ENCODE measurements at regions of chr10 and their contacts with region 1.

Region 1: GRCh38 chr10:29784175-29784773 is 149.5 kb upstream of the SVIL start:
- DNase-seq: peak; percentile 99
- H3K4me3 ChIP-seq: no peak overlapping the region
- H3K27ac ChIP-seq: peak overlapping the region; percentile 82
- H3K4me1 ChIP-seq: peaks cover 27% of the 10 kb centered on the region
- H3K27me3 ChIP-seq: no peaks in the 10 kb centered on the region
- CTCF ChIP-seq: no peak
- POLR2A ChIP-seq: peak; percentile 63

Region 2: DNA sequence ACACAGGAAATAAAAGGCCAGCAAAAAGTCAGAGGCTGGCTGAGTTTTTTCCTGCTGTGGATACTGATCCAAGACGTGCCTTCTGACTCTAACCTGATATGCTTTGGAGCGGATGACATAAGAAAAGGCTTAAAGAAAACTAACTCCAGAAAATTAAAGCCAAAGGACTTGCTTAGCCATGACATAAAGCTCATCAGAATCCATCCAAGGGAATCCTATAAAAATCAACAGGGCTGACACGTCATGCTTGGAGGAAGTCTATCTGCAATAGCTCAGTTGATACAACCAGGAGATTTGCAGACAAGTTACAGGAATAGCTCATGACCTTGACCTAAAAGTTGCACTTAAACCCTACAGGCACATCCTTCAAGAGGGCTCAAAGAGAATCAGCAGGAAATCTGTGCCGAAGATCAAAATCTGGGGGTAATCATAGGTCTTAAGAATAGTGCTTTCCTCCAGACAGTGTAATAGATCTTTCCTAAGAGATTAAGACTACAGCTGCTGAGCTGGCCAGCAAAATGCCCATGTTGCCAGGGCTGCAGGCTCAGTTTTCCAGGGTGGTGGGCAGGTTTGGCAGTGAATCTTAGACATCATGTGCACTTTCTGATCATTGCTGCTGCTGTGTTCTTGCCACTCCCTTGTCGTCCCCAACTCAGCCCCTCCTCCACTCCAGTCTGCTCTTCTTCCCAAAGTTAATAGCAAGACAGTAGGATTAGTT is 38.0 kb before region 1 on chr10:
- CTCF ChIA-PET with region 1: no interaction called
- POLR2A ChIA-PET with region 1: interaction called, 3 read pairs
- dilution Hi-C with region 1: no loop called
- intact Hi-C with region 1: loop called (anchors 2 kb)
- DNase-seq: peak; percentile 90
- H3K4me3 ChIP-seq: no peak overlapping the region
- H3K27ac ChIP-seq: peak overlapping the region; percentile 68
- H3K4me1 ChIP-seq: peaks cover 16% of the 10 kb centered on the region
- H3K27me3 ChIP-seq: no peaks in the 10 kb centered on the region
- CTCF ChIP-seq: no peak
- POLR2A ChIP-seq: no peak

Region 3: DNA sequence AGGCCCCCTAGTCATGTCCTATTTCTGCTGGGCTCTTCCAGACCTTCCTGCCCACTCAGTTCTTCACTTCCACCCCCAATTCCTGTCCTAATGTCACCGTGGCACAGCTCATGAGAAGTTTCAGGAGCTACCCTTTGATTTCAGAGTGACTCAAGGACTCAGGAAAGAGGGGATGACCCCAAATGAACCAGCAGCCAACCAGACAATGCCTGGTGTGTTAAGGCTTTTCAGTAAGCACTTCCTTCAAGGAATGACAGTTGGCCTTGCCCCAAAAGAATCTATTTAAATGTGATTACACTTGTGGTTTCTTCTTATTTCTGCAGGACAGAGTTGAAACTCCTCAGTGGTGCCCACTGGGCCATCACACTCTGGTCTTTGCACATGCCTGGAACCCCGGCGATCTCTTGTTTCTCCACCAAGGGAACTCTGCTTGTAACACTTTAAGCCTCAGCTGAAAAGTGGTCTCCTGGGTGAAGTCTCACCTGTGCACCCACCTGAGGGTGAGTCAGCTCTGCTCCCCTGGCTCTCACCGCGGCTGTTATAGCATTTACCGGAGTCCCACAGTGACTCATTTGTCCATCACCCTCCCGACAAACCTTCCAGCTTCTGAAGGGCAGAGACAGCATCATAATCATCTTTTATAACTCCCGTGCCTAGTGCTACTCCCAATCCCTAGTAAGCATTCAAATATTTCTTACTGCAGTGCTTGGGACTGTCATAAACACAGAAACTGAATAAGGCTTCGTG is 26.6 kb before region 1 on chr10:
- CTCF ChIA-PET with region 1: no interaction called
- POLR2A ChIA-PET with region 1: no interaction called
- dilution Hi-C with region 1: no loop called
- intact Hi-C with region 1: loop called (anchors 1 kb)
- DNase-seq: peak; percentile 83
- H3K4me3 ChIP-seq: peak overlapping the region in 1 of 3 experiments; percentile 26
- H3K27ac ChIP-seq: peak overlapping the region; percentile 66
- H3K4me1 ChIP-seq: peaks cover 26% of the 10 kb centered on the region
- H3K27me3 ChIP-seq: no peaks in the 10 kb centered on the region
- CTCF ChIP-seq: no peak
- POLR2A ChIP-seq: no peak

Region 4: DNA sequence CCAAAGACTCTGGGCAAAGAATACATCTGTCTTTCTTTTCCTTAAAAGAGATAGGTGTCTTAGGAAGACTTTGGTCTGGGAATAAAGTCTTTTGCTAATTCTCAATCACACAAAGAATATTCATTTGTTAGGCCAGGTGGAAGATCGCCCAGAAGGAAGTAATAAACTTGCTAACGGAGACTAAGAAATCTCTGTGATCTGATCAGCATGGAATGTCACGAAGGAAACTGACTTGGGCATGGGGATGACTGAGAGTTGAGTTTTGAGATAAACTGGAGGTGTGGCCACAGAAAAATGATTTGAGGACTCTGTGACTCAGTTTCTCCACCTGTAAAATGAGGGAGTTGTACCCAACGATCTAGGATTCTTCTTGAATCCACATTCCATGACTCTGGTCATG is 11.6 kb after region 1 on chr10:
- CTCF ChIA-PET with region 1: interaction called, 5 read pairs
- POLR2A ChIA-PET with region 1: no interaction called
- dilution Hi-C with region 1: no loop called
- intact Hi-C with region 1: loop called (anchors 1 kb)
- DNase-seq: peak; percentile 60
- H3K4me3 ChIP-seq: no peak overlapping the region
- H3K27ac ChIP-seq: peak overlapping the region; percentile 25
- H3K4me1 ChIP-seq: peaks cover 35% of the 10 kb centered on the region
- H3K27me3 ChIP-seq: no peaks in the 10 kb centered on the region
- CTCF ChIP-seq: no peak
- POLR2A ChIP-seq: no peak

Region 5: DNA sequence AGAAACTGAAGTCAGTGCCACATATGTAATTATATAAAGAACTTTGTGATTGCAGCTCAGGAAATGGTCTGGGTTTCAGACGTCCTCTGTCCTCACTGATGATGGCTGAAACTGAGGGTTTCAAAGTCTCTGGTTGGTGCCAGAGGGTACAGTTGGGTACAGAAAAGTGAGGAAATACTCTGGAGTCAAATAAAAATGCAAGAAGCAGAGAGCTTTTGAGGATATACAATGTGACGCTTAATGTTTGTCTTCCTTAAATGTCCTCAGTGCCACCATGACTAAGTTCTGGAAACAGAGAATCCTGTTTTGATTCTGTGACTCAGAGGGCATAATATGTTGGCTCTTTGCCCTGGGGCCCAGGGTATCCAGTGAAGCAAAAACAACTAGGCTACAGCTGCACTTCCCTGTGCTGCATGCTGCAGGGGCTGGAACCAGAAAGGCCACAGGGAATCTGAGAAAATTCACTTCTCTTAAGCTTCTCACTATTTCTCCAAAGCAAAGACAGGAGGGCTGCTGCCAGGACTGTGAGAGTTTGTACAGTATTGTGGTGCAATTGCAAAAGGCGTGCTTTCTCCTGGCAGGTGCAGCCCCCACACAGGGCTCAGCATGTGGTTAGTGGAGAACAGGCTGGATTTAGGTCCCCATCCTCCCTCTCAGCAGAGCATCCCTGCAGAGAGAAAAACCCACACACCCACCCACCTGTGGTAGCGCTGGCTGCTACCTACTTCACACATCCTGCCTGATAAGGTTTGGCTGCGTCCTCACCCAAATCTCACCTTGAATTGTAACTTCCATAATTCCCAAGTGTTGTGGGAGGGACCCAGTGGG is 20.0 kb after region 1 on chr10:
- CTCF ChIA-PET with region 1: interaction called, 5 read pairs
- POLR2A ChIA-PET with region 1: interaction called, 3 read pairs
- dilution Hi-C with region 1: no loop called
- intact Hi-C with region 1: loop called (anchors 1 kb)
- DNase-seq: peak; percentile 99
- H3K4me3 ChIP-seq: peak overlapping the region in 1 of 3 experiments; percentile 31
- H3K27ac ChIP-seq: peak overlapping the region; percentile 99
- H3K4me1 ChIP-seq: peaks cover 54% of the 10 kb centered on the region
- H3K27me3 ChIP-seq: no peaks in the 10 kb centered on the region
- CTCF ChIP-seq: no peak
- POLR2A ChIP-seq: no peak

Region 6: DNA sequence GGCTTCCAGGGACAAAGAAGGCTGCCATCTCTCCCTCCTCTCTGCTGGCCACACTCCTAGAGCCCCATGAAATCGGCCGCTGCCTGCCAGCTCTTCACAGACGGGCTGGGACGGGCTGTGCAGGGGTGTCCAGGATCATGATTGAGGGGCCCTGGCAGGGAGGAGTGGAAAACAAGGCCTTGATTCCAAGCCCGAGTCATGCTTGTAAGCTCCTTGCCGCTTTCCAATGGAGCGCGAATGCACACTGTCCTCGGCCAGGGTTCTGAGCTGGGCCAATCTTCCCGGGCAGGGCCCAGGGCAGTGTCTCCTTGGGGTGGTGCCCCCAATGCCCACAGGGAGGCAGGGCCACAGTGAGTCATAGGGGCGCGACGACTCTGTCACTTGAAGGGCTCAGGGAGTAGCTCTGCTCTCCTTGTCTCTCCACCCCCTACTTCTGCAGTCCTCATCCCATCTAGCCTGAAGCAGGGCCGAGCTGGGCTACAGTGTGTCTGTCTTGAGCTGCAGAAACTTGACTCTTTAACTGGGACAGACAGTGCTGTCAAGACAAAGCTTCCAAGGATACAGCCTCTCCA is 36.7 kb after region 1 on chr10:
- CTCF ChIA-PET with region 1: no interaction called
- POLR2A ChIA-PET with region 1: no interaction called
- dilution Hi-C with region 1: no loop called
- intact Hi-C with region 1: no loop called
- DNase-seq: no peak
- H3K4me3 ChIP-seq: no peak overlapping the region
- H3K27ac ChIP-seq: no peak overlapping the region
- H3K4me1 ChIP-seq: no peaks in the 10 kb centered on the region
- H3K27me3 ChIP-seq: no peaks in the 10 kb centered on the region
- CTCF ChIP-seq: no peak
- POLR2A ChIP-seq: no peak

Region 7: GRCh38 chr10:29849126-29849833 is 65.0 kb after region 1 on chr10:
- CTCF ChIA-PET with region 1: interaction called, 3 read pairs
- POLR2A ChIA-PET with region 1: no interaction called
- dilution Hi-C with region 1: no loop called
- intact Hi-C with region 1: loop called (anchors 1 kb)
- DNase-seq: peak; percentile 86
- H3K4me3 ChIP-seq: peak overlapping the region in 1 of 3 experiments; percentile 52
- H3K27ac ChIP-seq: peak overlapping the region; percentile 81
- H3K4me1 ChIP-seq: peaks cover 31% of the 10 kb centered on the region
- H3K27me3 ChIP-seq: no peaks in the 10 kb centered on the region
- CTCF ChIP-seq: no peak
- POLR2A ChIP-seq: peak; percentile 64

Region 8: DNA sequence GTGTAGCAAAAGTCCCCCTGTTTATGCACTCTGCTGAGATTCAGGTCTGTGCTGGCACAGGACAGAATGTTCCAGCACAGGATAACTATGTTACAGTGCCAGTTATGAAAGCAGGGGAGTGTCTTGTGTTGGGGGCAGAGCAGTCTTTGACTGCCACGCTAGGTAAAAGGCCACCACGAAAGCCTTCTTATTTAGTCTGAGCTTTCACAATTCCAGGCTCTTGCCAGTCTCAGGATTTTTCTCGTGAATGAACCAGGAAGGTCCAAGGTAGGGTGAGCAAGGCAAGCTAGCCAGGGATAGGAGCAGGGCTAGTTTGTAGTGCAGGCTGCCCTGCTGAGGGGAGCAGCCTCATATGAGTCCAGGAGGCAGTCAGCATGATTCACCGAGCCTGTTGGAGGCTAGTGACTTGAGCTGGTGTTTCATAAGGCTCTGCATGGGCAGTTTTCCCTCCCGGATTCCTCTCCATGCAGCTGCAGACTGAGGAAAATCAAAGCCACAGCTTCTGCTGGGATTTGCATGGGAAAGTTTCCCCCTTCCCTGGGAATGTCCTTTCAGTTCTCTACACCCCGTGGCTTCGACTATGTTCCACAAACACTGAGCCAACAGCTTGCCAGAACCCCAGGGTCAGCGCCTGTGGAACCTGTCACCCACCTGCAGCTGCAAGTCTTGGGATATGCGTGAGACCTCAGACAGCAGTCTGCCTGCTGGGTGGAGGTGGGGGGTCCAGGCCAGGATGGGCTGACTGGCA is 162.9 kb after region 1 on chr10:
- CTCF ChIA-PET with region 1: no interaction called
- POLR2A ChIA-PET with region 1: no interaction called
- dilution Hi-C with region 1: no loop called
- intact Hi-C with region 1: no loop called
- DNase-seq: peak; percentile 73
- H3K4me3 ChIP-seq: no peak overlapping the region
- H3K27ac ChIP-seq: peak overlapping the region; percentile 33
- H3K4me1 ChIP-seq: peaks cover 51% of the 10 kb centered on the region
- H3K27me3 ChIP-seq: no peaks in the 10 kb centered on the region
- CTCF ChIP-seq: no peak
- POLR2A ChIP-seq: no peak

Region 9: GRCh38 chr10:30324448-30325110 is 540.3 kb after region 1 on chr10:
- CTCF ChIA-PET with region 1: no interaction called
- POLR2A ChIA-PET with region 1: no interaction called
- dilution Hi-C with region 1: no loop called
- intact Hi-C with region 1: loop called (anchors 5 kb)
- DNase-seq: no peak
- H3K4me3 ChIP-seq: no peak overlapping the region
- H3K27ac ChIP-seq: no peak overlapping the region
- H3K4me1 ChIP-seq: no peaks in the 10 kb centered on the region
- H3K27me3 ChIP-seq: no peaks in the 10 kb centered on the region
- CTCF ChIP-seq: no peak
- POLR2A ChIP-seq: no peak

Measured in endothelial cell of umbilical vein (primary cell).